ENCODE measurements at regions of chr1 and their contacts with region 1.

Region 1: DNA sequence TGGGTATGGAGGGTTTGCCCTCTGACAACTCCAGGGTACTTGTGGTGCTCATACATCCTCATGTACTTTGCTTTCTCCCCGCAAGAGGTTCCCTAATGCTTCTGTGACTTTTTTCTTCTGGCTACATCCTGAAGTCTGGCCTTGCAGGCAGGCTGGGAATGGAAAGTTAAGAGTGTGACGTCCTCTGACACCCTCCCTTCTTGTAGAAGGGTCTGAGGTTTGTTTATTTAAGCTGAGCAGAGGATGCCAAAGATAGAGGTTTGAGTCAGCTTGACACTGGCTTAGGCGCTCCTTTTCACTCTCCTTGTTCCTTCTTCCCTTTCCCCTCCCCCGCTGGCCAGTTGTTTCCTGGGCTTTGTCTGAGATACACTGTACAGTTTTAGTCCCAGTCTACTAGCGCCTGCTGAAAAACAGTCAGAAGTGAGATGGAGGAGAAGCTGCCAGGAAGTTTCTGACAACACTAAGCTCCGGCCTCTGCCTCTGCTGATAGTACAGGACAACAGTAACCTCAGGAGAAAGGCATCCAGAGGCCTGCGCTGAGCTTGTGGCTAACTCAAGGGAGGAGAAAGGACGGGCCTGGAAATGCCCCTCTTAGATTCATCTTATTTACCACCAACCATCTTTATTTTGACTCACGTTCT is at the start of gene MACF1:
- DNase-seq: no peak
- H3K4me3 Mint-ChIP-seq: peak within 1 kb of the TSS; percentile 97
- H3K27ac Mint-ChIP-seq: peak within 1 kb of the TSS; percentile 96
- H3K4me1 Mint-ChIP-seq: peaks cover 51% of the 10 kb centered on the region
- H3K27me3 Mint-ChIP-seq: no peaks in the 10 kb centered on the region
- total RNA-seq, gene MACF1: 210 and 212 TPM in 2 replicates

Region 2: GRCh38 chr1:39214998-39215873 is 10.7 kb after region 1 on chr1:
- intact Hi-C with region 1: loop called (anchors 1 kb)
- DNase-seq: no peak
- H3K4me3 Mint-ChIP-seq: peak overlapping the region; percentile 89
- H3K27ac Mint-ChIP-seq: peak overlapping the region; percentile 93
- H3K4me1 Mint-ChIP-seq: peaks cover 41% of the 10 kb centered on the region
- H3K27me3 Mint-ChIP-seq: no peaks in the 10 kb centered on the region